ENCODE measurements at regions of chr9 and their contacts with region 1.

Region 1: DNA sequence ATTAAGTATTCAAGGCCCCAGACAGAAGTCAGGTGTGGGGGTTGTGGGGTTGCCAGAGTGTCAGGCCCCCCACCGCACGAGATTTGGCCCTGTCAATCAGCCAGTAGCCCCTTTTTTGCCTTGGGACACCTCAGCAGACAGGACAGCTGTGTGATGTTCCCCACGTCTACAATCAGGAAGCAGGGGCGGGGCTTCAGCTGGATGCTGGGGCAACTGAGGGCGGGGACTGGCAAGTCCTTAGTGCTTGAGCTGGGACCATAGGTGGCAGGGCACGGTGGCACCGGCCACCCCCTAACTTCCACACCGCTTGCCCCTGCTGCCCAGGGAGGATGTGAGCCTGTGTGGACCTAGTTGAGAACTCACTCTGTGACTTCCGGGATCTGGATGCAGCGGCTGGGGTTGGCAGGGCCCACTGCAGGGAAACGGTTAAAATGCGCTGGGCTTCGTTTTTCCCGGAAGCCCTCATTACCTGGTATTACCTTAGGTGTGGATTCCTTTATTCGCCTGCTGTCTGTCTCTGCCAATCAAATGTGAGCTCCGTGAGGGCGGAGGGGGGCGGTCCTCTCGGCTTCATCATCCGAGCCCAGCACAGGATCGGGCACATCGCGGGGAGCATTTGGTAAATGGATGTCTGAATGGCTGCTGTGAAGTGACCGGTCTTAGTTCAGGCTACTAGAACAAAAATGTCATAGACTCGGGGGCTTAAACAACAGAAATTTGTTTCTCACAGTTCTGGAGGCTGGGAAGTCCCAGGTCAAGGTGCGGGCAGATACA is 7.5 kb upstream of the GTF3C5 start:
- DNase-seq: no peak
- H3K4me3 ChIP-seq: no peak overlapping the region
- H3K27ac ChIP-seq: no peak overlapping the region
- H3K4me1 ChIP-seq: no peaks in the 10 kb centered on the region
- H3K27me3 ChIP-seq: no peaks in the 10 kb centered on the region
- CTCF ChIP-seq: no peak
- POLR2A ChIP-seq: no peak

Region 2: GRCh38 chr9:133149126-133150107 is 126.1 kb after region 1 on chr9:
- intact Hi-C with region 1: loop called (anchors 10 kb)
- DNase-seq: peak; percentile 86 to 90
- H3K4me3 ChIP-seq: peak overlapping the region; percentile 62 to 74
- H3K27ac ChIP-seq: peak overlapping the region; percentile 86 to 91
- H3K4me1 ChIP-seq: peaks cover 0 to 21% of the 10 kb centered on the region in 2 donors
- H3K27me3 ChIP-seq: no peaks in the 10 kb centered on the region
- CTCF ChIP-seq: peak in 3 of 4 experiments; percentile 23 to 40 (median 26)
- POLR2A ChIP-seq: peak; percentile 46 to 49

Region 3: GRCh38 chr9:133199648-133200321 is 176.5 kb after region 1 on chr9:
- intact Hi-C with region 1: no loop called
- DNase-seq: peak in 1 of 2 donors; percentile 45
- H3K4me3 ChIP-seq: peak overlapping the region; percentile 23 to 24
- H3K27ac ChIP-seq: peak overlapping the region in 1 of 2 donors; percentile 54
- H3K4me1 ChIP-seq: no peaks in the 10 kb centered on the region
- H3K27me3 ChIP-seq: no peaks in the 10 kb centered on the region
- CTCF ChIP-seq: peak in 1 of 4 experiments; percentile 20
- POLR2A ChIP-seq: no peak